Activated CD4-positive, alpha-beta memory T cell treated with anti-CD3 and anti-CD28 coated beads, Interleukin-2, amount 10 ng/mL, durations not matched to agents 7 days and 5 days (primary cell): ENCODE measurements at regions of chr14 and their contacts with region 1.

Region 1: DNA sequence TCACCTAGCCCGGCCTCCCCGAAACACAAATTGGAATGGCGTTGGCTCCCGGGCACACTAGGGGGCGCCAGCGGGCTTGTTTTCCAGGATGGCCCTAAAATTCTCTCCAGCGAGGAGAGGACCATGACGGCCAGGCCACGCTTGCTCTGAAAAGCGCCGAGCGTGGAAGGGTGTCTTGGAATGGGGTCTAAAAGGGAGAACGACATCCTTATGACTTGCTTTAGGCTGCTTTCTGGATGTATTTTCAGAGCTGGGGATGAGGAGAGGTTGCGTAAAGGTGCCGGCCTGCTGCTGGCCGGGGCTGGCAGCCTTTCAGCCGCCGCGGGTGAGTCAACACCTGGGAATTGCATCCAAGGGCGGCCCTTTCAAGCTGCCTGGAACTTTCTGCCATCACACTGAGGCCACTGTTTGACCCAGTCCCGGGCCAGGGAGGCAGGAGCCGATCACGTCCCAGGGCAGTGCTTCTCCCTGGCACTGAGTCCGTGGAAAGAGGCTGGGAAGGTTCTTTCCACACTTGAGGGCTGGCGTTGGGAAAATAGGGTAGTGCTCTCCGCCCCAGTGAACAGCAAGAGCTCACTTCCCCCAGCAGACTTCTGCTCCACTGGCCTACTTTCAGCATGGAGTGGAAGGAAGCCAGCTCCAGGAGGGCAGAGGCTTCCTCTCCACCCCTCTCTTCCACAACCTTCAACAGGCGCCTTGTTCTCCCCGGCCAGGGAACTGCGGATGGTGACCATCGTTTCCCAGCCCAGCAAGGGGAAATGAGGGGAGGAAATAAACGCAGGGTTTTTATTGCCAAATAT is 216.2 kb downstream of the TTC8 start:
- DNase-seq: peak; percentile 80
- H3K4me3 Mint-ChIP-seq: no peak overlapping the region
- H3K27ac Mint-ChIP-seq: no peak overlapping the region
- H3K4me1 Mint-ChIP-seq: peaks cover 6% of the 10 kb centered on the region
- H3K27me3 Mint-ChIP-seq: peaks cover 17% of the 10 kb centered on the region

Region 2: DNA sequence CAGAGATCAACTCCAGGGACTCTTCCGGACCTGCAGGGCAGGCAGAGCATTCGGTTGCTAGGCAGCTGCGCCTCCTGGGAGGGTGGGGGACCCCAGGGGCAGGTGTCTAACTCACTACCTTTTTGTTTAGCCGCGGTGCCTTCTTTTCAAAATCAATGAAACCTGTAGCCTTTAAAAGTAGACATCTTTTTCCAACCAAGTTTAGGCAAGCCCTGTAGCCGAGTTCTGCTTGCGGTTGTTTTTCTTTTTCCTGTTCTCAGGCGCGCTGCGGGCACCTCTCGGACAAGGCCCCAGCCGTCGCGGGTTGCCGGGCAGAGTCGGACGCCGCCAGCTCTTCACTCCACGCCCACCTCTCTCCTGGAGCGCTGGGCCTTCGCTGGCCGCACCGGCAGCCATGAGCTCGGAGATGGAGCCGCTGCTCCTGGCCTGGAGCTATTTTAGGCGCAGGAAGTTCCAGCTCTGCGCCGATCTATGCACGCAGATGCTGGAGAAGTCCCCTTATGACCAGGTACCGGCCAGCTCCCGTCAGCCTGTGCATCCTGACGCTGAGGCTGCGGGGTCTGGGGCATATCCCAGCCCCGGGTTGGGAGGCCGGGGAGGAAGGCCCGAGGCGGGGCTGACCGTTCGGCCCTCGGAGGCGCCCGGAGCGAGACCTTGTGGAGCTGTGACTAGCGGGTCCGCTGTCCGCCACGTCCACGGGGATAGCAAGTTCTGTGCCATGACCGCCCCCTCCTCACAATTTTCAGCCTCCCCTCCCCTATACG is 216.2 kb before region 1 on chr14 and contains the start of gene TTC8:
- CTCF ChIA-PET with region 1: no interaction called
- POLR2A ChIA-PET with region 1: no interaction called
- DNase-seq: peak; percentile 86
- H3K4me3 Mint-ChIP-seq: peak within 1 kb of the TSS; percentile 83
- H3K27ac Mint-ChIP-seq: peak within 1 kb of the TSS; percentile 89
- H3K4me1 Mint-ChIP-seq: peaks cover 14% of the 10 kb centered on the region
- H3K27me3 Mint-ChIP-seq: peaks cover 4% of the 10 kb centered on the region
- total RNA-seq, gene TTC8: 1.8 to 2.3 TPM

Region 3: DNA sequence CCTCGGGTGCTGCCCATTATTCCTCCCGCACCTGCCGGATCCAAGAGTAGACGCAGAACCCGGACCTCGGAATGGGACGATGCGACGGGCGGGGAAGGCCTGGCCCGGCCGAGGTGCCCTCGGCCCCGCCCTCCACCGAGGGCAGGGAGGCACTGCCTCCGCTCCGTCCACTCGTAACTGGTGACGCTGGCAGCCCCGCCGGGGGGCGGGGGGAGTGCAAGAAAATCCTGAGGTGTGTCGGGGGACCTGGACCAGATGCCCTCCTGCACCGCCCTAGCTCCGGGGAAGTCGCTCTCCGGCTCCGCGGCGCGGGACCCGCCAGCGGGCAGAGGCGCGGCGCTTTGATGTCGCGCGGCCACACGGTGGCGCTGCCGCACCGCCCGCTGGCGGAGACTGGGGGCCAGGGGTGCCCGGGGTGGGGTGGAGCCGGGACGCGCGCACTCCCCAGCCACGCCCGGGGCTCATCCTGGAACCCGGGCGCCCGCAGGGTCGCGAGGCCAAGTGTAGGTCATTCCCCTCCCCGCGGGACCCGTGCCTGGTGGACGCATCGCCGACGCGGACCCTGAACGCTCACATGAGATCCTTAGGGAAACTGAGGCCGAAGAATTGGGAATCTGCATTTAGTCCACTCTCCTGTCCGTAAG is 13.4 kb before region 1 on chr14:
- CTCF ChIA-PET with region 1: interaction called, 10 read pairs
- POLR2A ChIA-PET with region 1: no interaction called
- DNase-seq: peak; percentile 57
- H3K4me3 Mint-ChIP-seq: peak overlapping the region; percentile 48
- H3K27ac Mint-ChIP-seq: no peak overlapping the region
- H3K4me1 Mint-ChIP-seq: peaks cover 8% of the 10 kb centered on the region
- H3K27me3 Mint-ChIP-seq: peaks cover 58% of the 10 kb centered on the region

Region 4: DNA sequence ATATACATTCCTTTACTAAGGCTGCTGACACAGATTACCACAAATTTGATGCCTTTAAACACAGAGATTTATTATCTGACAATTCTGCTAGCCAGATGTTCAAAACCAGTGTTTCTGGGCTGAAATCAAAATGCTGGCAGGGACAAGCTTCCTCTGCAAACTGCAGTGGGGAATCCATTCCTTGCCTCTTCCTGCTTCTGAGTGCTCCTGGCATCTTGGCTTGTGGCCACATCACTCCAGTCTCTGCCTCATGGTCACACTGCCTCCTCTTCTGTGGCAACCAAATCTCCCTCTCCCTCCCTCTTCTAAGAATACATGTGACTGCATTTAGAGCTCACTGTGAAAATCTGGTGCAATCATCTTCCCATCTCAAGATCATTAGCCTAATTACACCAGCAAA is 19.5 kb after region 1 on chr14:
- CTCF ChIA-PET with region 1: no interaction called
- POLR2A ChIA-PET with region 1: no interaction called
- DNase-seq: no peak
- H3K4me3 Mint-ChIP-seq: no peak overlapping the region
- H3K27ac Mint-ChIP-seq: no peak overlapping the region
- H3K4me1 Mint-ChIP-seq: no peaks in the 10 kb centered on the region
- H3K27me3 Mint-ChIP-seq: peaks cover 31% of the 10 kb centered on the region

Region 5: DNA sequence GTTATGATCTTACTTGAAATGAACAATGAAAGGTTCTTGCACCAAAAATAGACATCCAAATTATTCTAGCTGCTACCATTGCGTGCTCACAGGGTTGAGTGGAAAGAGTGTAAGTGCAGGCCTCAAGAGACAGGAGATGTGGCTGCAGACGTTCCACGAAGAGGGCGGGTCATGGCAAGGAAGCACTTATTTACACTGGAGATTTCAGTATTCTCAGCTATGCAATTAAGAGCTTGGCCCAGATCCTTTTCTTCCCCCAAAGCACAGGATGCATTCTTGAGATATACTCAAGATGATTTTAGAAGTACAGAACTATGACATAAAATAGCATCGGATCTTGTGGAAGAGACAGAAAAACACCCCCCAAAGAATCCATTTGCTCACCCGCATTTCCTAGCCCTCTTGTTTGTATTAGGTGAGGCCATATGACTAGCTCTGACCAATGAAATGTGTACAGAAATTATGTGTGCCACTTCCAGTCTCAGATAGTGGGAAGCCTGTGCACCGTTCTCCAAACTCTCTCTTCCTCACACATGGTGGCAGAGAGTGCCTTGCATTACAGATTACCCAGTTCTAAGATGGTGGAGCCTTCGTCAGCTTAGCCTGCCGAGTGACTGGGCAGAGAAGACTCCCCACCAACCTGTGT is 45.2 kb after region 1 on chr14:
- CTCF ChIA-PET with region 1: no interaction called
- POLR2A ChIA-PET with region 1: no interaction called
- DNase-seq: no peak
- H3K4me3 Mint-ChIP-seq: no peak overlapping the region
- H3K27ac Mint-ChIP-seq: no peak overlapping the region
- H3K4me1 Mint-ChIP-seq: no peaks in the 10 kb centered on the region
- H3K27me3 Mint-ChIP-seq: no peaks in the 10 kb centered on the region

Region 6: DNA sequence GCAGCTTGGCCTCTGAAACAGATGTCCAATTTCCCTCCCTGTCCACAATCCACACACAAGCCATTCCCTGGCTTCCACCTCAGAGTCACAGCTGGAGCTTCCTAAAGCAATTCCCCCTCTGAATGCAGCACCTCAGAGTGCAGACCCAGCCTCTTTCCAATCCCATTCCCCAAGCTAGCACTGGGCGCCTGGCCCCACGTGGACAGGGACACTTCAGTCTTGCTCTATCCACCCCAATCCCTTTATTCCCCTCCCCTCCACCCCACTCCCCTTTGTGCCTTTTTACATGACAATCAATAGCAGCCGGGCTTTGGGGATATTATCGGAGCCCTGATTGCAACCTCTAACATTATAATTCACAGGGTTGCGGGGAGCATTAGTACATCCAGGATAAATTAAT is 76.4 kb after region 1 on chr14:
- CTCF ChIA-PET with region 1: no interaction called
- POLR2A ChIA-PET with region 1: no interaction called
- DNase-seq: no peak
- H3K4me3 Mint-ChIP-seq: no peak overlapping the region
- H3K27ac Mint-ChIP-seq: no peak overlapping the region
- H3K4me1 Mint-ChIP-seq: no peaks in the 10 kb centered on the region
- H3K27me3 Mint-ChIP-seq: peaks cover 3% of the 10 kb centered on the region